ENCODE measurements at regions of chr1 and their contacts with region 1.

Region 1: GRCh38 chr1:226702957-226703831 is 35.9 kb downstream of the ITPKB start:
- DNase-seq: peak; percentile 85
- H3K4me3 ChIP-seq: peak overlapping the region; percentile 53 to 63
- H3K27ac ChIP-seq: peak overlapping the region; percentile 97 to 99
- H3K4me1 ChIP-seq: peaks cover 36% of the 10 kb centered on the region
- H3K27me3 ChIP-seq: no peaks in the 10 kb centered on the region
- CTCF ChIP-seq: peak in 1 of 4 experiments; percentile 10
- POLR2A ChIP-seq: peak; percentile 82

Region 2: DNA sequence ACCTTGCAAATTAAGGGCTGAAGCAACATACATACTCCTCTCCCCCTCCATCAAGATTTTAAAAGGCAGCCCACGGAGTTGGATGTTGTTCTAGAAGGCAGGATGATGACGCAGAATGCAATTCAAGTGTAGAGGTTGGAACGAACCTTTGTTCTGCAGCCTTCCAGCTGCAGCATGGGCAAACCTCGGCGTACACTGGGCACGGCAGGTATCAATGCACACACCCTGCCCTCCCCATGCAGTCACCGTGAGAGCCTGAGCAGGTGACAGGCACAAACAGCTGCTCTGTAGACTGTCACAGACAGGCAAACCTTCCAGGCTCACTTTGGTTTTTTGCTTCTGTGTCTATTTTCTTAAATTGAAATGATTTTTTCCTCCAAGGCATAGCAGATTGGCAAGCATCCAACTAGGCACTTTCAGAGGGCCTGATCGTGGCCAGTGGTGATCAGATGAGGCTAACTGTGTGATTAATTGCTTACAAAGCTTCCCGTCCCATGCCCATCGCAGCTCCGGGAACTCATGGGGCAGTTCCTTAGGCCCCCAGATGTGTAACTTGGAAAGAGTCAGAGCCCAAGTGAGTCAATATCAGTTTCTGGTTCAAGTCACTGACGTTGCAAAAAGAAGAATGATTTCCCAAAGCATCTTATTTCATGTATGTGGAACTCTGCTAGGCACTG is 46.5 kb before region 1 on chr1:
- intact Hi-C with region 1: loop called (anchors 5 kb)
- DNase-seq: peak; percentile 50
- H3K4me3 ChIP-seq: no peak overlapping the region
- H3K27ac ChIP-seq: peak overlapping the region; percentile 62 to 74
- H3K4me1 ChIP-seq: peaks cover 31% of the 10 kb centered on the region
- H3K27me3 ChIP-seq: no peaks in the 10 kb centered on the region
- CTCF ChIP-seq: no peak
- POLR2A ChIP-seq: no peak

Region 3: DNA sequence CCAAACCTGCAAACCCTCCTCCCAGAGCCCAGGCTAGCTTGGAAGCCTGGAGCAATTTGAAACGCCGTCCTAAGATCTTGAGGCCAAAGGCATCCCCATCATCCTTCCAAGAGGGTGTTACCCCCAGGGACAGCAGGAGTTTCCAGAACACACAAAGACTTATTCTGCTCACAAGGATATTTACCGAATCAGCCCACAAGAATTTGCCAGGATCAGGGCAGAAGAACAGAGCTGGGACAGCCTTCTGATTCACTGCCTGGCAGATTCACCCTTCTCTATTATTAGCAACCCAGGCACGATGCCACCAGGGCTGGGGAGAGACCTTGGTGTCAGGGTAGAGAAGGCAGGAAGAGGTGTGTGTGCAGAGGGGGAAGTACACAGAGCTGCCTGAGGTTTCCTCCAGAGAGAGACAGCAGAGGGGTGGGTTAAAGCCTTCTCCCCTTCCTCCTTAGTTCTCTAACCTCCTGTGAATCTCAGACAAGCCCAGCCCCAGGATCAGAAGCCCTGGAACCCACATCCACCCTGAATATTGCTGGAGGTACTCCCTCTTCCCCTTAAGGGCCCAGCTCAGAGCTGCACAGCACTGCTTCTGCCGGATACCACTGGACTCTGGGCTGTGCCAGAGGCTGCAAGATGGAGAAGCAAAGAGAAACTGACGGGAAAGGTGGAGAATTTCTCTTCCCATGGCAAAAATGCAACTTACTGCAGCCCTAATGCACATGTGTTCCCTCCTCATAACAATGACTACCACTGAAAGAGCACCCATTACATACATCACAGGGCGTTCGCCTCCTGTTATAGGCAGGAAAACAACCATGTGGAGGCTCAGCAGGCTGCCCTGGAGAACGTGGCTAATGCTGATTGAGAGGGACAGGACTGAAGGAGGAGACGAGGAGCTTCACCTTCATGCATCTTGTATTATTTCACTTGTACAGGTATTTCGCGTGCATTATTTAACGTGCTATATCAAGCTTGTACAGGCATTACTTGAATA is 25.9 kb before region 1 on chr1:
- intact Hi-C with region 1: loop called (anchors 2 kb)
- DNase-seq: peak; percentile 96
- H3K4me3 ChIP-seq: no peak overlapping the region
- H3K27ac ChIP-seq: peak overlapping the region; percentile 95 to 97
- H3K4me1 ChIP-seq: peaks cover 22% of the 10 kb centered on the region
- H3K27me3 ChIP-seq: no peaks in the 10 kb centered on the region
- CTCF ChIP-seq: no peak
- POLR2A ChIP-seq: no peak